ENCODE measurements at regions of chr11 and their contacts with region 1.

Region 1: GRCh38 chr11:10735481-10736475 is 15.3 kb upstream of the CTR9 start:
- DNase-seq: peak; percentile 92
- H3K4me3 ChIP-seq: no peak overlapping the region
- H3K27ac ChIP-seq: peak overlapping the region; percentile 41
- H3K4me1 ChIP-seq: peaks cover 10% of the 10 kb centered on the region
- H3K27me3 ChIP-seq: no peaks in the 10 kb centered on the region
- CTCF ChIP-seq: peak; percentile 98
- POLR2A ChIP-seq: no peak

Region 2: DNA sequence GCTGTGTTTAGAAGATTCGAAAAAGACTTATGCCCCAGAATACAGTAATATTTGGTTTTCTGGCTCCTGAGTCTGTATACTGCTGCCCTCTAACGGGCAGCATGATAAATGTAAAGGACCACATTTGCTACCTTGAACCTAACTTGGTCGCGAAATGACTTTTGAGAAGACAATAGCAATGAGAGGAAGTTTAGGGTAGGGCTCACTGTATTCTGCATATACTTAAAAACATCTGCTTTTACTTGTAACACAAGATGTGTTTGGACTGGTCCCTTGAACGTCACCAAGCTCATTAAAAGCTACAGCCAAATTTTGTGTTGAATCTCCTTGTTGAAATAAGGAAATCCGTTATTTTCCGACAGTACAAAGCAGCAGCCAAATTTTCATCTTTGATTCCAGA is 762.8 kb before region 1 on chr11:
- CTCF ChIA-PET with region 1: no interaction called
- POLR2A ChIA-PET with region 1: no interaction called
- dilution Hi-C with region 1: no loop called
- intact Hi-C with region 1: loop called (anchors 1 kb)
- DNase-seq: peak; percentile 74
- H3K4me3 ChIP-seq: no peak overlapping the region
- H3K27ac ChIP-seq: no peak overlapping the region
- H3K4me1 ChIP-seq: peaks cover 14% of the 10 kb centered on the region
- H3K27me3 ChIP-seq: no peaks in the 10 kb centered on the region
- CTCF ChIP-seq: peak; percentile 58 to 61
- POLR2A ChIP-seq: no peak

Region 3: DNA sequence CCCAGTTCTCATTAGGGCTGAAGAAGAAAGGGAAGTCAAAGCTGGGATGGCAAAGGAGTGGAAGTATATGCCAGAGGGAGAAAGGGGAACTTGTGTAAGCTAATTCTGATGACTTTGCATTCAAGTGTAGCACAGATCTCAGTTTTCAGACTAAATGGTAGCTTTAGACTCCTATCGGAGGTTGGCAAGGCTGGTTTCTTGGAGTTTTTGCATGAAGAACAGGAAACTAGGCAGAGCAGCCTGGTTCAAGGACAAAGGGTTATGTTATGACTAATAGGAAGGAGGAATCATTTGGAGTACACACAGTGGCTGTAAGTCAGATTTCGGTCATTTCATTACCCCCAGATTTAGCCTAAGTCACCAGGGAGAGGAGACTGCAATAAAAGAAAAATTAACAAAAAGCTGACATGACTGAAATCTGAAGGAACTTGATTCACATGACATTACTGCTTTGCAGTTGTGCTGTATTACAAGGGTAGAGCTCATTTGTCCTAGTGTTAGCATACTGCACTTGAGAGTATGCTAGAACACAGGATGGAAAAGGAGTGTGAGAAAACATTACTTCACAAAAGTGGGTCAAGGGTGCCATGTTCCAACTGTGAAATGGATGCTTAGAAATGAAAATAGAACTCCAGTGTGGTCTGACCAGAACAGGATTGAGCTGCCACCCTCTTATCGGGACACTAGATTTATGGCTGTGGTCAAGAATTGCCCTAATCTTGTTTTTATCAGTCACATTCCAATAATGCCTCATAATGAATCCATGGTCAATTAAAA is 407.3 kb before region 1 on chr11:
- CTCF ChIA-PET with region 1: interaction called, 6 read pairs
- POLR2A ChIA-PET with region 1: no interaction called
- dilution Hi-C with region 1: no loop called
- intact Hi-C with region 1: loop called (anchors 1 kb)
- DNase-seq: peak; percentile 94
- H3K4me3 ChIP-seq: peak overlapping the region in 1 of 3 experiments; percentile 14
- H3K27ac ChIP-seq: peak overlapping the region; percentile 84
- H3K4me1 ChIP-seq: peaks cover 67% of the 10 kb centered on the region
- H3K27me3 ChIP-seq: no peaks in the 10 kb centered on the region
- CTCF ChIP-seq: no peak
- POLR2A ChIP-seq: peak; percentile 43

Region 4: GRCh38 chr11:10413268-10413667 is 322.5 kb before region 1 on chr11:
- CTCF ChIA-PET with region 1: interaction called, 15 read pairs
- POLR2A ChIA-PET with region 1: no interaction called
- dilution Hi-C with region 1: no loop called
- intact Hi-C with region 1: loop called (anchors 1 kb)
- DNase-seq: peak; percentile 20
- H3K4me3 ChIP-seq: no peak overlapping the region
- H3K27ac ChIP-seq: no peak overlapping the region
- H3K4me1 ChIP-seq: peaks cover 13% of the 10 kb centered on the region
- H3K27me3 ChIP-seq: peaks cover 2 to 5% of the 10 kb centered on the region in 2 experiments
- CTCF ChIP-seq: peak in 1 of 2 donors; percentile 16
- POLR2A ChIP-seq: no peak

Region 5: GRCh38 chr11:10623797-10624761 is 111.7 kb before region 1 on chr11:
- CTCF ChIA-PET with region 1: interaction called, 10 read pairs
- POLR2A ChIA-PET with region 1: no interaction called
- dilution Hi-C with region 1: no loop called
- intact Hi-C with region 1: loop called (anchors 1 kb)
- DNase-seq: no peak
- H3K4me3 ChIP-seq: no peak overlapping the region
- H3K27ac ChIP-seq: no peak overlapping the region
- H3K4me1 ChIP-seq: peaks cover 3% of the 10 kb centered on the region
- H3K27me3 ChIP-seq: no peaks in the 10 kb centered on the region
- CTCF ChIP-seq: peak; percentile 14 to 39
- POLR2A ChIP-seq: no peak

Measured in endothelial cell of umbilical vein (primary cell).